ENCODE measurements at regions of chr5 and their contacts with region 1.

Region 1: DNA sequence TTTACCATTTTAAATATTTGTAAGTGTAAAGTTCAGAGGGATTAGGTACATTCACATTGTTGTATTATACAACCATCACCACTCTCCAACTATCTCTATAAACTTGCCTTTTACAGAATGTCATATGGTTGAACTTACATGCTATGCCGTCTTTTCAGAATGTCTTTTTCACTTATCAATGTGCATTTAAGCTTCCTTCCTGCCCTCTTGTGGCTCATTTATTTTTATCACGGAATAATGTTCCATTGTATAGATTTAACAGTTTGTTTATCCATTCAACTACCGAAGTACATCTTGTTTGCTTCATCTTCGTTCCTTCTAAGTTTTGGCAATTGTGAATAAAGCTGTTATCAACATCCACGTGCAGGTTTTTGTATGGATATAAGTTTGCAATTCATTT is 133.3 kb upstream of the C6 start:
- DNase-seq: no peak
- H3K4me3 ChIP-seq: no peak overlapping the region
- H3K4me3 Mint-ChIP-seq: no peak overlapping the region
- H3K27ac Mint-ChIP-seq: no peak overlapping the region
- H3K4me1 ChIP-seq: peaks cover 9% of the 10 kb centered on the region; the same call in 1 of the 2 replicates
- H3K4me1 Mint-ChIP-seq: peaks cover 6% of the 10 kb centered on the region
- H3K27me3 ChIP-seq: no peaks in the 10 kb centered on the region
- H3K27me3 Mint-ChIP-seq: peaks cover 8% of the 10 kb centered on the region
- CTCF ChIP-seq: no peak

Region 2: GRCh38 chr5:40812125-40812524 is 534.5 kb before region 1 on chr5:
- CTCF ChIA-PET with region 1: no interaction called
- POLR2A ChIA-PET with region 1: no interaction called
- intact Hi-C with region 1: no loop called
- DNase-seq: no peak
- H3K4me3 ChIP-seq: no peak overlapping the region
- H3K4me3 Mint-ChIP-seq: no peak overlapping the region
- H3K27ac Mint-ChIP-seq: no peak overlapping the region
- H3K4me1 ChIP-seq: no peaks in the 10 kb centered on the region
- H3K4me1 Mint-ChIP-seq: no peaks in the 10 kb centered on the region
- H3K27me3 ChIP-seq: no peaks in the 10 kb centered on the region
- H3K27me3 Mint-ChIP-seq: no peaks in the 10 kb centered on the region
- CTCF ChIP-seq: no peak

Region 3: GRCh38 chr5:40869384-40869783 is 477.2 kb before region 1 on chr5:
- CTCF ChIA-PET with region 1: no interaction called
- POLR2A ChIA-PET with region 1: no interaction called
- intact Hi-C with region 1: no loop called
- DNase-seq: no peak
- H3K4me3 ChIP-seq: no peak overlapping the region
- H3K4me3 Mint-ChIP-seq: no peak overlapping the region
- H3K27ac Mint-ChIP-seq: no peak overlapping the region
- H3K4me1 ChIP-seq: peaks cover 4% of the 10 kb centered on the region; the same call in 1 of the 2 replicates
- H3K4me1 Mint-ChIP-seq: no peaks in the 10 kb centered on the region
- H3K27me3 ChIP-seq: no peaks in the 10 kb centered on the region
- H3K27me3 Mint-ChIP-seq: no peaks in the 10 kb centered on the region
- CTCF ChIP-seq: no peak

Region 4: GRCh38 chr5:41296066-41296465 is 50.5 kb before region 1 on chr5:
- CTCF ChIA-PET with region 1: no interaction called
- POLR2A ChIA-PET with region 1: no interaction called
- intact Hi-C with region 1: no loop called
- DNase-seq: no peak
- H3K4me3 ChIP-seq: no peak overlapping the region
- H3K4me3 Mint-ChIP-seq: no peak overlapping the region
- H3K27ac Mint-ChIP-seq: no peak overlapping the region
- H3K4me1 ChIP-seq: no peaks in the 10 kb centered on the region
- H3K4me1 Mint-ChIP-seq: no peaks in the 10 kb centered on the region
- H3K27me3 ChIP-seq: no peaks in the 10 kb centered on the region
- H3K27me3 Mint-ChIP-seq: no peaks in the 10 kb centered on the region
- CTCF ChIP-seq: no peak

Region 5: GRCh38 chr5:41433552-41434181 is 87.1 kb after region 1 on chr5:
- CTCF ChIA-PET with region 1: no interaction called
- POLR2A ChIA-PET with region 1: no interaction called
- intact Hi-C with region 1: no loop called
- DNase-seq: no peak
- H3K4me3 ChIP-seq: no peak overlapping the region
- H3K4me3 Mint-ChIP-seq: no peak overlapping the region
- H3K27ac Mint-ChIP-seq: no peak overlapping the region
- H3K4me1 ChIP-seq: no peaks in the 10 kb centered on the region
- H3K4me1 Mint-ChIP-seq: no peaks in the 10 kb centered on the region
- H3K27me3 ChIP-seq: no peaks in the 10 kb centered on the region
- H3K27me3 Mint-ChIP-seq: no peaks in the 10 kb centered on the region
- CTCF ChIP-seq: peak; percentile 26 to 52

Region 6: DNA sequence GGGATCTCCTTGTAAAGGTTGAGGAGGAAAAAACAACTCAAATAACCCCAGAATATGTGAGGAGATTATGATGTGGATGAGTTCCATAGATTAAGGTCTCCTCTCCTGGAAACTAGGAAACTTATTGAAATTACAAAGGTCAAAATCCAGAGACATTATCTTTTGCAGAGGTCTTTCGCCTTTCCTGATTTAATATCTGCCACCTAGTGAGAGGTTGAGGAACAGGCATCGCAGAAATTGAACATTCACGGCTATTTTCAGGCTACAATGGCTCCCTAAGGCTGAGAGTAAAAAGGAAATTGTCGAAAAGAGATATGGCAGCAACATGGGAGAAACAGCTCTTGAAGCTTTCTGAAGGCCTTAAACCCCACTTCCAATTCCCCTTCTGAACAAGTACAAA is 291.3 kb after region 1 on chr5:
- CTCF ChIA-PET with region 1: no interaction called
- POLR2A ChIA-PET with region 1: no interaction called
- intact Hi-C with region 1: loop called (anchors 2 kb)
- DNase-seq: no peak
- H3K4me3 ChIP-seq: no peak overlapping the region
- H3K4me3 Mint-ChIP-seq: no peak overlapping the region
- H3K27ac Mint-ChIP-seq: peak overlapping the region; percentile 7
- H3K4me1 ChIP-seq: peaks cover 32% of the 10 kb centered on the region
- H3K4me1 Mint-ChIP-seq: peaks cover 13% of the 10 kb centered on the region
- H3K27me3 ChIP-seq: no peaks in the 10 kb centered on the region
- H3K27me3 Mint-ChIP-seq: no peaks in the 10 kb centered on the region
- CTCF ChIP-seq: peak in 1 of 2 experiments; percentile 15